Activated CD8-positive, alpha-beta T cell treated with anti-CD3 and anti-CD28 coated beads for 36 hours (primary cell): ENCODE measurements at regions of chr10 and their contacts with region 1.

Region 1: DNA sequence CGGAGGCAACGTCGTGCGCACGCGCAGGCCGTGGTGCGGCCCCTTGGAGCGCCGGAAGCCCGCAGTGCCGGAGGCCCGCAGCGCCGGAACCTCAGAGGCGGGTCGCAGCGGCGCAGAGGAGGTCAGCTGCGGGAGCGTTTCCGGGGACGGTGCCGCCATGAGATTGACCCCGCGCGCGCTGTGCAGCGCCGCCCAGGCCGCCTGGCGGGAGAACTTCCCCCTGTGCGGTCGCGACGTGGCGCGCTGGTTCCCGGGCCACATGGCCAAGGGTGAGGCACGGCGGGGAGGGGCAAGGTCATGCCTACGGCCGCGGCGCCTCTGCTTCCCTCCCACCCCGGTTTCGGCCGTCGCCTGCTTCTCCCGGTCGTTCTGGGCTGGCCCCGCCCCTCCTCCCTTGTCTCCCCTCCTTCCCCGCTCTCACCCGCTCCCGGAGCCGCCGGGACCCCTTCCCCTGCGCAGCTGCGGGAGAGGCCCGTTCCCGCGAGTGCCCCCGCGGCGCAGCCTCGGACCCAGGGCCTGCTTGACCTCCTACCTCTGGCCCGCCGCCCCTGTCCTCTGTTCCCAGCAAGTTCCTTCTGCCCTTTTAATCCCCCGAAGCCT is at the start of gene MTG1:
- DNase-seq: peak; percentile 92
- ATAC-seq: peak; percentile 74
- H3K4me3 Mint-ChIP-seq: peak within 1 kb of the TSS; percentile 88
- H3K27ac Mint-ChIP-seq: peak within 1 kb of the TSS; percentile 92
- H3K4me1 Mint-ChIP-seq: peaks cover 50% of the 10 kb centered on the region
- H3K27me3 Mint-ChIP-seq: no peaks in the 10 kb centered on the region
- CTCF ChIP-seq: no peak
- total RNA-seq, gene MTG1: 45.7 to 48.9 TPM

Region 2: GRCh38 chr10:133357285-133358151 is 36.6 kb before region 1 on chr10 and contains the start of gene FUOM:
- CTCF ChIA-PET with region 1: interaction called, 3 read pairs
- POLR2A ChIA-PET with region 1: interaction called, 20 read pairs
- intact Hi-C with region 1: no loop called
- DNase-seq: peak; percentile 84
- ATAC-seq: peak; percentile 91
- H3K4me3 Mint-ChIP-seq: peak within 1 kb of the TSS; percentile 82
- H3K27ac Mint-ChIP-seq: peak within 1 kb of the TSS; percentile 82
- H3K4me1 Mint-ChIP-seq: peaks cover 14% of the 10 kb centered on the region
- H3K27me3 Mint-ChIP-seq: no peaks in the 10 kb centered on the region
- CTCF ChIP-seq: no peak
- total RNA-seq, gene FUOM: 32.2 to 33.7 TPM

Region 3: GRCh38 chr10:133373104-133373624 is 21.0 kb before region 1 on chr10 and contains the start of gene ECHS1:
- CTCF ChIA-PET with region 1: interaction called, 3 read pairs
- POLR2A ChIA-PET with region 1: interaction called, 14 read pairs
- intact Hi-C with region 1: no loop called
- DNase-seq: peak; percentile 96
- ATAC-seq: peak; percentile 99
- H3K4me3 Mint-ChIP-seq: peak within 1 kb of the TSS; percentile 78
- H3K27ac Mint-ChIP-seq: peak within 1 kb of the TSS; percentile 77
- H3K4me1 Mint-ChIP-seq: peaks cover 11% of the 10 kb centered on the region
- H3K27me3 Mint-ChIP-seq: no peaks in the 10 kb centered on the region
- CTCF ChIP-seq: no peak
- total RNA-seq, gene ECHS1: 50.7 to 51.4 TPM

Region 4: GRCh38 chr10:133378251-133379096 is 15.7 kb before region 1 on chr10:
- CTCF ChIA-PET with region 1: interaction called, 3 read pairs
- POLR2A ChIA-PET with region 1: interaction called, 14 read pairs
- intact Hi-C with region 1: no loop called
- DNase-seq: peak; percentile 70
- ATAC-seq: peak; percentile 41
- H3K4me3 Mint-ChIP-seq: peak overlapping the region; percentile 74
- H3K27ac Mint-ChIP-seq: no peak overlapping the region
- H3K4me1 Mint-ChIP-seq: peaks cover 7% of the 10 kb centered on the region
- H3K27me3 Mint-ChIP-seq: no peaks in the 10 kb centered on the region
- CTCF ChIP-seq: no peak